ENCODE measurements at regions of chr5 and their contacts with region 1.

Region 1: GRCh38 chr5:32092938-32093812 is 80.9 kb downstream of the GOLPH3 start:
- H3K4me3 ChIP-seq: no peak overlapping the region
- H3K27ac ChIP-seq: no peak overlapping the region
- H3K4me1 ChIP-seq: no peaks in the 10 kb centered on the region
- CTCF ChIP-seq: peak; percentile 91

Region 2: GRCh38 chr5:31581498-31582099 is 511.6 kb before region 1 on chr5:
- CTCF ChIA-PET with region 1: interaction called, 14 read pairs
- POLR2A ChIA-PET with region 1: no interaction called
- H3K4me3 ChIP-seq: no peak overlapping the region
- H3K27ac ChIP-seq: no peak overlapping the region
- H3K4me1 ChIP-seq: no peaks in the 10 kb centered on the region
- CTCF ChIP-seq: no peak

Region 3: GRCh38 chr5:31825518-31826068 is 267.6 kb before region 1 on chr5:
- CTCF ChIA-PET with region 1: interaction called, 54 read pairs
- POLR2A ChIA-PET with region 1: no interaction called
- H3K4me3 ChIP-seq: no peak overlapping the region
- H3K27ac ChIP-seq: no peak overlapping the region
- H3K4me1 ChIP-seq: peaks cover 10% of the 10 kb centered on the region; the same call in 1 of the 2 replicates
- CTCF ChIP-seq: peak; percentile 68

Region 4: DNA sequence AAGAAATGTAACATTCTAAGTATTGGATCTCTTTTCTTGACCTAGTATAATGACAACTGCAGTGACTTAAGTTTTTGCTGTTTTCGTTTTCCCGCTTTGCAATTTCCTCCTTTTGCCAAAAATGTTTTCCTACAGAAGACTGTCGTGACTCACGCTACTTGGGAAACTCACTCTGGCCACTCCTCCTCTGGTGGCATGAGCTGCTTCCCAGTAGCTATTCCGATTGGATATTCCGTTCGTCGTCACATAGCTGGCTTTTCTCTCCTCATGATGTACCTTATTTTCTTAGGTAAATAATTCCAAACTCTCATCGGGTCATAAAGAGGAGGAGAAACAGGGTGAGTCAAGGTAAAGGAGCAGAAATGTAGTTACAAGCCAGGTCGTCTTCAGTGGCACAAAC is 16.1 kb after region 1 on chr5:
- CTCF ChIA-PET with region 1: interaction called, 19 read pairs
- POLR2A ChIA-PET with region 1: interaction called, 4 read pairs
- H3K4me3 ChIP-seq: no peak overlapping the region
- H3K27ac ChIP-seq: no peak overlapping the region
- H3K4me1 ChIP-seq: no peaks in the 10 kb centered on the region
- CTCF ChIP-seq: no peak

Region 5: GRCh38 chr5:32115985-32116384 is 22.8 kb after region 1 on chr5:
- CTCF ChIA-PET with region 1: interaction called, 11 read pairs
- POLR2A ChIA-PET with region 1: no interaction called
- H3K4me3 ChIP-seq: no peak overlapping the region
- H3K27ac ChIP-seq: no peak overlapping the region
- H3K4me1 ChIP-seq: no peaks in the 10 kb centered on the region
- CTCF ChIP-seq: no peak

Region 6: DNA sequence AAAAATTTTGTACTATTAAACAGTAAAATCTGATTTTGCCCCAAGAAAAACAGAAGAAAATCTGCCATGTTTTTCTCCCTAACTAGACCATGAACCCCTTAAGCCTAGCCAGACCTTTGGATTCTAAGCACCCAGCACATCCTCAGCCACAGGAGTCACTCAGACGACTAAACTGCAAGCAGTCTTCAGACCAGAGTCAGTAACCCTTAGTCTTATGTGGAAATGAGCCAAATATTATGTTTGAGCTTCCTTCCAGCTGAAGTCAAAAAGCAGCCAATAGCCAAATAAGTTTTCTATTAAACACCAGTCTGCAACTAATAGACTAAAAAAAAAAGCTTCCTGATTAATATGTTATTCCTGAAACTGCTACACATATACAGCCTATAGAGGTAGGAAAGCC is 33.5 kb after region 1 on chr5:
- CTCF ChIA-PET with region 1: no interaction called
- POLR2A ChIA-PET with region 1: no interaction called
- H3K4me3 ChIP-seq: no peak overlapping the region
- H3K27ac ChIP-seq: no peak overlapping the region
- H3K4me1 ChIP-seq: peaks cover 14% of the 10 kb centered on the region
- CTCF ChIP-seq: no peak

Measured in HEK293 (cell line).